ENCODE measurements at regions of chr17 and their contacts with region 1.

Region 1: DNA sequence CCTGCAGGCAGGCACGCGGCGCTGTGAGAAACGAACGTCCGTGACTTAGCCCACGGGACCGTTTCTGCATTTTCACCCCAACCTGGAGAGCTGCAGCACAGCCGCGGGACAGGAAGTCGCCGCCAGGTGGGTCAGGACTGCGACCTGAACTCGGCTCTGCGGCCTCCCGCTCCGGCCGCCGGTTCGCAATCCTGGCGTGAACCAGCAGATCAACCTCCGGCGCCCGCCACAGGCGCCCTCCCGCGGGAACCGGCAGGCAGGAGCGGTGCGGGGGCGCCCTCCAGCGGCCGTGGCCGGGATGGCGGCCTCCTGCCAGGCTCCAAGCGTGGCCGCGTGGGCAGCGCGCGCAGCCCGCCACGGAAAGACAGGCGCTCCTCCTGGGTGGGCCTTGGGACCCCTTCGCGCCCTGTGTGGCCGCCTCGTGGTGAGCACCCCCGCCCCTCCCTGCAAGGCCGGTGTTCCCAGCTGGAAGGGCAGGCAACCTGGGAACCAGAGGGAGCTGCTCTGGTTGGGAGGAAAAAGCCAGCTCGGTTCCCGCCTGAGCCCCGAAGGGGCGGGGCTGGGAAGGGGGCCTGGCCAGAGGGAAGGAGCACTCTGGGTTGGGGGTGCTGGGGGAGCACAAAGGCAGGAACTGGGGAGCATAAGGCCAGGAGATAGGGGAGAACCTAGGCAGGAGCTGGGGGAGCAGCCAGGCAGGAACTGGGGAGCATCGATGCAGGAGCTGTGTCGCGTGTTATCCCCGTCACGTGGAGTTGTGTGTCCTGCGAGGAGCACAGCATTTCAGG is 28.2 kb downstream of the ACTG1 start:
- DNase-seq: peak; percentile 93
- ATAC-seq: peak; percentile 74

Region 2: DNA sequence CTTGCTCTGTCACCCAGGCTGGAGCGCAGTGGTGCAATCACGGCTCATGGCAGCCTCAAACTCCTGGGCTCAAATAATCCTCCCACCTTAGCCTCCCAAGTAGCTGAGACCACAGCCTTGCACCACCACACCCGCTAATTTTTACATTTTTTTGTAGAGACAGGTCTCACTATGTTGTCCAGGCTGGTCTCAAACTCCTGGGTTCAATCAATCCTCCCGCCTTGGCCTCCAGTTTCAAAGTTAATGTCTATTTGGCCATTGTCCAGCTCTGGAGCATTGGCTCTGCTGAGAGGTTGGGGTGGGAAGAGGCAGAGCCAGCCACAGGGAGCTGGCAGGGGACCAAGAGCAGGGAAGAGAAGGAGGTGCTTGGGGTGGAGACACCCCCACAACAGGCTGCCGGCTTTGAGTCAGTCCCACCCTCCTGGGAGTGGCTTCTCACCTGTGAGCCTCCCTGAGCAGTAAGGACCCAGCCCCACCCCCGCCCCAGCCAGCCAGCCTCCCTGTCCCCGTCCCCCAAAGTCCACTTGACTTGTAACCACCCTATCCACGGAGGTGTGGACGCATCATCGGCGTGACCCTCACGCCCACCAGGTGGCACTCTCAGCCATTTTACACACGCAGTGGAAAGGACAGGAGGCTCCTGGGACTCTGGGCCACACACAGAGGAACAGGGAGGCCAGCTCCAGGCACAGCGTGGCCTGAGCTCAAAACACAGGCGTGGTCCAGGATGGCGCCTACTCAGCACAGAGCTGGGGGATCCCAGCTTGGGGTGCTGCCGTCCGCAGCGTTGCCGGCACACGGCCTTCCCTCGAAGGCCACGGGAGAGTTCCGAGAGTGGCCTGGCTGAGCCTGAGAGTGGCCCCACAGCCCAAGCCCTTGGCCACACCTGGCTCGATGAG is 341.8 kb before region 1 on chr17:
- intact Hi-C with region 1: no loop called
- DNase-seq: peak; percentile 90
- ATAC-seq: peak; percentile 97

Region 3: DNA sequence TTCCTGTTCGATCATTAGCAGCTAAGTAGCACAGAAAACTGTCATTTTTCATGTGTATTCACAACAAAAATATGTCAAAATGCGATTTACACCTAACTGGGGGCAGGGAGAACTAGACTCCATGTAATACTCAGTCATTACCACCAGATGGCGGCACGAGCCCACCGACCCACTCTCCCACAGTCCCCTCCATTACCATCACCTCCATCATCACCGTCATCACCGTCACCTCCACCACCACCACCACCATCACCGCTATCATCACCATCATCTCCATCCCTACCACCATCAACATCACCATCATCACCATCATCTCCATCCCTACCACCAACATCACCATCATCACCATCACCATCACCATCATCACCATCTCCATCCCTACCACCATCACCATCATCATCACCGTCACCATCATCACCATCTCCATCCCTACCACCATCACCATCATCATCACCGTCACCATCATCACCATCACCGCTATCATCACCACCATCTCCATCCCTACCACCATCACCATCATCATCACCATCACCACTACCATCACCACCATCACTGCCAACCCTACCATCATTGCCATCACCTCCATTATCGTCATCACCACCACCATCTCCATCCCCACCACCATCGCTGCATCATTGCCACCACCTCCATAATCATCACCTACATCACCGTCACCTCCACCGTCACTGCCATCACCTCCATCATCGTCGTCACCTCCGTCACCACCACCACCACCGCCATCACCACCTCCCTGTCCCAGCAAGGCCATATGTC is 230.8 kb before region 1 on chr17:
- intact Hi-C with region 1: loop called (anchors 5 kb)
- DNase-seq: peak; percentile 70
- ATAC-seq: peak; percentile 50

Region 4: GRCh38 chr17:81294856-81295680 is 189.3 kb before region 1 on chr17 and contains the start of gene SLC38A10:
- intact Hi-C with region 1: loop called (anchors 5 kb)
- DNase-seq: peak; percentile 96
- ATAC-seq: peak; percentile 95
- total RNA-seq, gene SLC38A10: 41.3 TPM

Region 5: GRCh38 chr17:81394921-81395599 is 89.3 kb before region 1 on chr17 and contains the start of gene BAHCC1:
- intact Hi-C with region 1: loop called (anchors 2 kb)
- DNase-seq: peak; percentile 100
- ATAC-seq: peak; percentile 85
- total RNA-seq, gene BAHCC1: 8.0 TPM

Measured in Right ventricle myocardium superior (tissue), 1 donor.